OCI-LY7 (cell line): ENCODE measurements at regions of chr15 and their contacts with region 1.

Region 1: GRCh38 chr15:75453703-75454470 is 2.4 kb upstream of the SIN3A start:
- DNase-seq: peak; percentile 100
- H3K4me3 ChIP-seq: peak overlapping the region; percentile 97
- H3K27ac ChIP-seq: peak overlapping the region; percentile 96
- H3K4me1 ChIP-seq: peaks cover 25% of the 10 kb centered on the region
- CTCF ChIP-seq: no peak

Region 2: GRCh38 chr15:75201609-75202250 is 252.2 kb before region 1 on chr15 and contains the start of gene C15orf39:
- CTCF ChIA-PET with region 1: no interaction called
- POLR2A ChIA-PET with region 1: interaction called, 3 read pairs
- intact Hi-C with region 1: loop called (anchors 5 kb)
- DNase-seq: peak; percentile 87
- H3K4me3 ChIP-seq: peak within 1 kb of the TSS; percentile 88
- H3K27ac ChIP-seq: peak within 1 kb of the TSS; percentile 76
- H3K4me1 ChIP-seq: peaks cover 56% of the 10 kb centered on the region
- CTCF ChIP-seq: peak; percentile 87
- total RNA-seq, gene C15orf39: 19.7 and 26.5 TPM in 2 replicates

Region 3: GRCh38 chr15:75367913-75368688 is 85.8 kb before region 1 on chr15 and contains the start of gene MAN2C1:
- CTCF ChIA-PET with region 1: interaction called, 6 read pairs
- POLR2A ChIA-PET with region 1: interaction called, 29 read pairs
- intact Hi-C with region 1: loop called (anchors 1 kb)
- DNase-seq: peak; percentile 99
- H3K4me3 ChIP-seq: peak within 1 kb of the TSS; percentile 77
- H3K27ac ChIP-seq: peak within 1 kb of the TSS; percentile 88
- H3K4me1 ChIP-seq: peaks cover 23% of the 10 kb centered on the region
- CTCF ChIP-seq: peak; percentile 89
- total RNA-seq, gene MAN2C1: 98.8 and 113 TPM in 2 replicates

Region 4: GRCh38 chr15:75508840-75509532 is 55.1 kb after region 1 on chr15:
- CTCF ChIA-PET with region 1: interaction called, 13 read pairs
- POLR2A ChIA-PET with region 1: interaction called, 4 read pairs
- intact Hi-C with region 1: no loop called
- DNase-seq: peak; percentile 48
- H3K4me3 ChIP-seq: no peak overlapping the region
- H3K27ac ChIP-seq: no peak overlapping the region
- H3K4me1 ChIP-seq: no peaks in the 10 kb centered on the region
- CTCF ChIP-seq: peak; percentile 76

Region 5: DNA sequence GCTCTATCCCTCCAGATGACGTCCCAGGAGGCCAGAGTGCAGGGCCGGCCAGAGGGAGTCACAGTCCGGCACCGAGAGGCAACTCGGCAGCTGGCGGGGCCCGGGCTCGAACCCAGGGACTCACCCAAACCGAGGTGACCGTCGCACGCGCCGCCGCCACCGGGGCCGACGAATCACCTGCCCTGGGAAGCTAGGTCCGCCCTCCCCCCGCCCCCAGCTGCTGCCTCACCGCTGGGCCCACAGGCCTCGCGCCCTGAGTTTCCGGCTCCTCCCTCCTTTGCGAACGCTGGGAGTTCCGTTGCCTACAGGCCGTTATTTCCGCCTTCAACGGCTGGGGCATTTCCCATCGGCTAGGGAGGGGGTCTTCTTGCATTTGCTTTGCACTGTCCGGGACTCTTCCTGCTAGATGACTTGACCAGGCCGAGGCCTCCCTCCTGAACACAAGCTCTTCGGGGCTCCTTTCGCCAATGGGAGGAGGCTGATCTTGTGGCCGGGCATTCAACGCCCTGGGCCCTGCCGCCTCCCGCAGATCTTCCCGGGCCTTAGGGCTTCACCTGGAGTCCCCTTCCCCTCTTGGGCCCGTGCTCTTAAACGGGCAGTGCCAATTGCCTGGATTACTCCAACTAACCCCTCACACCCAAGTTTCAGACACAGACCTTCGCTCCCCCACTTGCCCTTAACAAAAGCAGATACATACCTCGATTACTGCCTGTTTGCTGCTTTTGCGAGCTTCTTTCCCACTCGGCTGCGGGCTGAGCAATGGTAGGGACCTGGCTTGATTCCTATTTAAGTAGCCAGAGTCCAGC is 171.9 kb after region 1 on chr15 and contains the start of gene SNUPN:
- CTCF ChIA-PET with region 1: no interaction called
- POLR2A ChIA-PET with region 1: interaction called, 12 read pairs
- intact Hi-C with region 1: loop called (anchors 2 kb)
- DNase-seq: peak; percentile 98
- H3K4me3 ChIP-seq: peak within 1 kb of the TSS; percentile 99
- H3K27ac ChIP-seq: peak within 1 kb of the TSS; percentile 93
- H3K4me1 ChIP-seq: peaks cover 21% of the 10 kb centered on the region
- CTCF ChIP-seq: no peak
- total RNA-seq, gene SNUPN: 32.4 and 44.4 TPM in 2 replicates